ENCODE measurements at regions of chr18 and their contacts with region 1.

Region 1: GRCh38 chr18:52288403-52289004 is 51.5 kb upstream of the DCC start:
- DNase-seq: peak; percentile 18 to 64 (median 30)
- ATAC-seq: peak; percentile 33
- H3K4me3 ChIP-seq: no peak overlapping the region
- H3K27ac ChIP-seq: no peak overlapping the region
- H3K4me1 ChIP-seq: no peaks in the 10 kb centered on the region
- H3K27me3 ChIP-seq: no peaks in the 10 kb centered on the region
- CTCF ChIP-seq: peak; percentile 42 to 61 (median 54)
- POLR2A ChIP-seq: no peak

Region 2: DNA sequence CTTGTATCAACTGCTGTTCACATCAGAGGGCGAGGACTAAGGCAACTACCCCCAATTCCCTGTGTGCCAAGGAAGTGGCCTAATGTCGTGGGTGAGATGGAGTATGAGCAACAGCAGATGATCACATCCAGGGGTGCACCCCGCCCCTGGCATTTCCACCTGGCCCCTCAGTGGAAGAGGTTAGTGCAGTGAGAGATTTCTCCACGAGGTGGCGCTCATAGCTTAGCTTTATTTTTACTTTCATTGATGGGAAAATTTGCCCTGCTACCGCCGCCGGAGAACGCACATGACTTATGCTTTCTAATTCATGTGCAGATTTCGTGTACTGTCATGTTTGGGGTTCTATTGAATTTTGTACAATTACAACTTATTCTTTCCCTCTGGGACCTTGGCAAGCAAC is 620.4 kb before region 1 on chr18:
- intact Hi-C with region 1: loop called (anchors 10 kb)
- DNase-seq: peak; percentile 66 to 77 (median 68)
- ATAC-seq: peak; percentile 56
- H3K4me3 ChIP-seq: no peak overlapping the region
- H3K27ac ChIP-seq: no peak overlapping the region
- H3K4me1 ChIP-seq: peaks cover 6% of the 10 kb centered on the region
- H3K27me3 ChIP-seq: no peaks in the 10 kb centered on the region
- CTCF ChIP-seq: peak; percentile 67 to 86 (median 76)
- POLR2A ChIP-seq: no peak